HEK293T (cell line): ENCODE measurements at regions of chr6 and their contacts with region 1.

Region 1: GRCh38 chr6:26234421-26235296 is 130.3 kb upstream of the BTN3A2 start:
- DNase-seq: peak; percentile 72

Region 2: GRCh38 chr6:25889877-25890853 is 344.5 kb before region 1 on chr6:
- CTCF ChIA-PET with region 1: no interaction called
- POLR2A ChIA-PET with region 1: no interaction called
- DNase-seq: peak; percentile 47

Region 3: DNA sequence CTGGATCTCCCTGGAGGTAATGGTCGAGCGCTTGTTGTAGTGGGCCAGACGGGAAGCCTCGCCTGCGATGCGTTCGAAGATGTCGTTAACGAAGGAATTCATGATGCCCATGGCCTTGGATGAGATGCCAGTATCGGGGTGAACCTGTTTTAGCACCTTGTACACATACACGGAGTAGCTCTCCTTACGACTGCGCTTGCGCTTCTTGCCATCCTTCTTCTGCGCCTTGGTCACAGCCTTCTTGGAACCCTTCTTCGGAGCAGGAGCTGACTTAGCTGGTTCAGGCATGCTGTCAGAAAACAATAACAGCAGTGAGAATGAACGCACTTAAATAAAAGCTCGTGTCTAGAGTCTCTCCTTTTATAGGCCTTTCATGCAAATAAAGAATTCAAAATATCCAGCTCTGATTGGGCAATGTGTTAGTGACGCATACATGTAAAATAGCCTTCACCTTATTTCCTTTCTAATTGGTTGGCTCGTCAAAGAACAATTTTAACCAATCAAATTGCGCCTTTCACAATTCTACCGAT is 18.2 kb before region 1 on chr6:
- CTCF ChIA-PET with region 1: no interaction called
- POLR2A ChIA-PET with region 1: interaction called, 26 read pairs
- DNase-seq: no peak

Region 4: GRCh38 chr6:26223650-26224546 is 10.8 kb before region 1 on chr6:
- CTCF ChIA-PET with region 1: no interaction called
- POLR2A ChIA-PET with region 1: interaction called, 42 read pairs
- DNase-seq: peak; percentile 63